ENCODE measurements at regions of chr15 and their contacts with region 1.

Region 1: DNA sequence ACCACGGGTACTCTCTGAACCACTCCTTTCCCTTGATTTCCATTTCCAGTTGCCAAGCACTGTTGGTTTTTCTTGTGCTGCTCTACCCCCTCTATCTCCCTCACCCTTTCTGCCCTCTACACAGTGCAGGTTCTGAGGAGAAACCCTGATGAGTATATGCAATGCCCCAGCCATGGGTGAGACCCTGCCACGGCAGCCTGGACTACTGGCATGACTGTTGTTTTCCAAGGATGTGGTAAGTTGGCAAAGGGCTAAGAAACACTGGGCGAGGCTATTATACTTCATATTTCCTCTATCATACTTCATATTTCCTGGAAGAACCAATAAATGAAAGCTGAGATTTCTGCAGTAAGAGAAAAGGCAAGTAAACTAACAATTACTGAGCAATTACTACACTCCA is 27.9 kb downstream of the CHAC1 start:
- DNase-seq: no peak
- ATAC-seq: peak; percentile 75
- H3K4me3 ChIP-seq: no peak overlapping the region
- H3K27ac ChIP-seq: no peak overlapping the region
- H3K4me1 ChIP-seq: no peaks in the 10 kb centered on the region
- H3K27me3 ChIP-seq: no peaks in the 10 kb centered on the region
- CTCF ChIP-seq: no peak

Region 2: GRCh38 chr15:40776522-40777137 is 204.6 kb before region 1 on chr15:
- CTCF ChIA-PET with region 1: no interaction called
- POLR2A ChIA-PET with region 1: no interaction called
- intact Hi-C with region 1: no loop called
- DNase-seq: peak; percentile 93
- ATAC-seq: peak; percentile 100
- H3K4me3 ChIP-seq: no peak overlapping the region
- H3K27ac ChIP-seq: peak overlapping the region; percentile 66
- H3K4me1 ChIP-seq: peaks cover 17% of the 10 kb centered on the region
- H3K27me3 ChIP-seq: no peaks in the 10 kb centered on the region
- CTCF ChIP-seq: no peak

Region 3: GRCh38 chr15:40952901-40953712 is 28.1 kb before region 1 on chr15 and contains the start of gene CHAC1:
- CTCF ChIA-PET with region 1: no interaction called
- POLR2A ChIA-PET with region 1: no interaction called
- intact Hi-C with region 1: no loop called
- DNase-seq: peak; percentile 97
- ATAC-seq: peak; percentile 91
- H3K4me3 ChIP-seq: peak within 1 kb of the TSS; percentile 79
- H3K27ac ChIP-seq: peak within 1 kb of the TSS; percentile 35
- H3K4me1 ChIP-seq: peaks cover 16% of the 10 kb centered on the region
- H3K27me3 ChIP-seq: no peaks in the 10 kb centered on the region
- CTCF ChIP-seq: no peak
- total RNA-seq, gene CHAC1: 6.2 and 13.3 TPM in 2 replicates

Region 4: GRCh38 chr15:40968290-40969085 is 12.7 kb before region 1 on chr15:
- CTCF ChIA-PET with region 1: no interaction called
- POLR2A ChIA-PET with region 1: no interaction called
- intact Hi-C with region 1: no loop called
- DNase-seq: peak; percentile 56
- ATAC-seq: no peak
- H3K4me3 ChIP-seq: no peak overlapping the region
- H3K27ac ChIP-seq: no peak overlapping the region
- H3K4me1 ChIP-seq: peaks cover 35% of the 10 kb centered on the region
- H3K27me3 ChIP-seq: no peaks in the 10 kb centered on the region
- CTCF ChIP-seq: no peak

Region 5: GRCh38 chr15:40999190-40999589 is 18.0 kb after region 1 on chr15:
- CTCF ChIA-PET with region 1: no interaction called
- POLR2A ChIA-PET with region 1: no interaction called
- intact Hi-C with region 1: loop called (anchors 2 kb)
- DNase-seq: peak; percentile 96
- ATAC-seq: peak; percentile 84
- H3K4me3 ChIP-seq: 0 out of 2 replicates have a peak overlapping the region, but pooled peaks have one; percentile 4
- H3K27ac ChIP-seq: peak overlapping the region; percentile 95
- H3K4me1 ChIP-seq: peaks cover 43% of the 10 kb centered on the region
- H3K27me3 ChIP-seq: no peaks in the 10 kb centered on the region
- CTCF ChIP-seq: no peak

Region 6: GRCh38 chr15:41022487-41023090 is 41.4 kb after region 1 on chr15:
- CTCF ChIA-PET with region 1: no interaction called
- POLR2A ChIA-PET with region 1: no interaction called
- intact Hi-C with region 1: loop called (anchors 2 kb)
- DNase-seq: peak; percentile 68
- ATAC-seq: peak; percentile 69
- H3K4me3 ChIP-seq: no peak overlapping the region
- H3K27ac ChIP-seq: no peak overlapping the region
- H3K4me1 ChIP-seq: peaks cover 13% of the 10 kb centered on the region
- H3K27me3 ChIP-seq: no peaks in the 10 kb centered on the region
- CTCF ChIP-seq: peak; percentile 84

Region 7: DNA sequence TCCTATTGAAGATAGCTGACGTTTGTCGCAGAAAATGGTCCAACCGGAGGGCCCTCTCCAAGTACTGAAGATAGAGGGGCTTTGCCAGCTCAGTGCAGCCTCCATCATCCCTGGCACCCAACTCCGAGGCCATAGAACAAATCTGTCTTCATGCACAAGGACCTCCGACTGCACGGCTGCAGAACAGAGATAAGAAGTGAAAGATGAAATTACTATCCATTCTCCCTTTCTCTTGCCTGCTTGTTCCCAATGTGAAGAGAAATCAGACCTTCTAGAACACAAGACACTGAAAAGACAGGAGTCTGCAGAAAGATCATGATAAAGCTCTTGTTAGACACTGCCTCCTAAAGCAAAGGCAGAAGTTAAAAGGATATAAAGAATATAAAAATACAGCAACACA is 115.0 kb after region 1 on chr15:
- CTCF ChIA-PET with region 1: no interaction called
- POLR2A ChIA-PET with region 1: no interaction called
- intact Hi-C with region 1: no loop called
- DNase-seq: no peak
- ATAC-seq: no peak
- H3K4me3 ChIP-seq: no peak overlapping the region
- H3K27ac ChIP-seq: no peak overlapping the region
- H3K4me1 ChIP-seq: no peaks in the 10 kb centered on the region
- H3K27me3 ChIP-seq: no peaks in the 10 kb centered on the region
- CTCF ChIP-seq: no peak

Measured in PC-3 (cell line).